Activated CD4-positive, alpha-beta T cell treated with anti-CD3 and anti-CD28 coated beads for 36 hours (primary cell): ENCODE measurements at regions of chr10 and their contacts with region 1.

Region 1: GRCh38 chr10:124221356-124222317 is 128.2 kb upstream of the CHST15 start:
- DNase-seq: no peak
- ATAC-seq: no peak
- H3K4me3 Mint-ChIP-seq: no peak overlapping the region
- H3K27ac Mint-ChIP-seq: no peak overlapping the region
- H3K4me1 Mint-ChIP-seq: no peaks in the 10 kb centered on the region
- H3K27me3 Mint-ChIP-seq: peaks cover 8% of the 10 kb centered on the region

Region 2: DNA sequence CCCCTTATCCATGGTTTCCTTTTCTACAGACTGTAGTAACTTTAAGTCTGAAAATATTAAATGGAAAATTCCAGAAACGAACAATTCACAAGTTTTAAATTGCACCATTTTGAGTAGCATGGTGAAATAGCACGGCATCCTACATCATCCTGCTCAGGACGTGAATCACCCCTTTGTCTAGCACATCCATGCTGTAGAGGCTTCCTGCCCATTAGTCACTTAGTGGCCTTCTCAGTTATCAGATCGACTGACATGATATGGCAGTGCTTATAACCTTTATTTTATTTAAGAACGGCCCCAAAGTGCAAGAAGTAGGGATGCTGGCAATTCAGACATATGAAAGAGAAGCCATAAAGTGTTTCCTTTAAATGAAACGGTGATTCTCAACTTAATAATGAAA is 412.7 kb before region 1 on chr10:
- CTCF ChIA-PET with region 1: no interaction called
- POLR2A ChIA-PET with region 1: no interaction called
- intact Hi-C with region 1: no loop called
- DNase-seq: peak; percentile 8
- ATAC-seq: peak; percentile 76
- H3K4me3 Mint-ChIP-seq: no peak overlapping the region
- H3K27ac Mint-ChIP-seq: no peak overlapping the region
- H3K4me1 Mint-ChIP-seq: no peaks in the 10 kb centered on the region
- H3K27me3 Mint-ChIP-seq: peaks cover 24% of the 10 kb centered on the region

Region 3: DNA sequence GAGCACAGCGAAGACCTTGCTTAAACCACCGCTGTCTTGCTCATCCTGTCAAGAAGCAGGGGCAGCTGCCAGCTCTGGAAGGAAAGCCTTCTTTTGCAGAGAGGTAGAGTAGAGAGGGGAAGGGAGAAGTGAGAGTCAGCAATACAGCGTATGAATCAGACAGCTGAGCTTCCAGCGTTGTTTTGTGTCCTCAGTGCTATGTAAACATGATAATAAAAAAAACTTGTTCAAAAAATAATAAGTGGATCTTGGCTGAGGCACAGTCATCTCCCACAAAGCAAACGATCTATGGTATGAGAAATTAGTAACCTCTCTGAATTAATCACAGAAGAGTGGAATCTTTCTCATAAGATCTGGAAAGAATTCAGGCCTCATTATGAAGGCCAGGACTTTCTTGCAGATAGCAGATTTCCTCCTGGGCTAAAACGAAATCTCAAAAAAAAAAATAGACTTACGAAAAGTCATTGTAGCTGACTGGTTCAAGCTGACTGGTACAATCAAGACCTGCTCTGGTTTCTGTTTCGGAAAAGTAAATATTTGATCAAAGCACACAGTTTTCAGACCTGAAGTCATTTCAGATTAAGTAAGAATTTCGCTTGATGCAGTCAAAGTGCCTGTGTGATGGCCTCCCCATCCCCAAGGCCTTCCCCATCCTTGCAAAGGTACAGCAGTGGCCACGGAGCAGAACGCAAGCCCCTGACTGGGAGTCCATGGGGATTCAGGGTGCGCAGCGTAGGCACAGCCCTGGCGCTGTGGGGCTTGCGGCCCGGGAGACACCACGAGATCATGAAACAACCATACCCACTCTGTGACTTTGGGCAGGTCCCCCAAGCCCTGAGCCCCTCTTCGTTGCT is 157.7 kb before region 1 on chr10:
- CTCF ChIA-PET with region 1: no interaction called
- POLR2A ChIA-PET with region 1: no interaction called
- intact Hi-C with region 1: loop called in 1 of 2 experiments (anchors 1 kb)
- DNase-seq: peak; percentile 10
- ATAC-seq: peak; percentile 76
- H3K4me3 Mint-ChIP-seq: no peak overlapping the region
- H3K27ac Mint-ChIP-seq: peak overlapping the region; percentile 12
- H3K4me1 Mint-ChIP-seq: peaks cover 29% of the 10 kb centered on the region
- H3K27me3 Mint-ChIP-seq: peaks cover 2% of the 10 kb centered on the region

Region 4: DNA sequence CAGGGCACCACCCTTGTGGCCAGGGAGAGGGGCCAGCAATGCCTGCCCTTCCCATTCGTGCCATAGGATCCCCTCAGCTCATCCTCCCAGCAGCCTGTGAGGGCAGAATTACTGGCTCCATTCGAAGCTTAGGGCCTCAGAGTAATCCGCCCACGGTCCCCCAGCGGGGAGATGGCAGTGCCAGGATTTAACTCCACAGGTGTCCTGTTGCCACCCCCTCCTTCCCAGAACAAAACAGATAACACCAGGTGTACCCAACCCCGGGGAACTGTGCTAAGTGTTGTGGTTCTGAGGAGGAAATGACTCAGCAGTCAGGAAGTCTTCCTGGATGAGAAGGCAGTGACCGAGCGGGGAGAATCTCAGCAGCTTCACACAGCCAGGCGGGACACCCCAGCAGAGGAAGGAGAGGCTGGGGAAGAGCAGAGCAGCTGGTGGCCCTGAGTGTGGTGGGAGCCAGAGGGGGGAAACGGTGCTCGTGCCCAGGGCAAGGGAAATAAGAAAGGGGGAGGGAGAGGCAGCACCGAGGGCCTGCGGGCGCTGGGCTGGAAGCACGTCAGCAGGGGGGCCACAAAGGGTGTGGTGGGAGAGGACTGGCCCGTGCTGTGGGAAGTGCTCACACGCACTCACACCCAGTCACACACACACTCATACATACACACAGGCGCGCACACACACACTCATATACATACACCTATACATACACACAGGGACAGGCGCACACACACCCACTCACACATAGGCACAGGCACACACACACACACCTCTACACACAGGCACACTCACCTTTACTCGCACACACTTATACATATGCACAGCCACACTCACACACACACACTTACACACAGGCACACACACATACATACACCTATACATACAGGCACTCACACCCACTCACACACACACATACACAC is 68.5 kb before region 1 on chr10:
- CTCF ChIA-PET with region 1: no interaction called
- POLR2A ChIA-PET with region 1: no interaction called
- intact Hi-C with region 1: loop called in 1 of 2 experiments (anchors 1 kb)
- DNase-seq: peak; percentile 72
- ATAC-seq: peak; percentile 85
- H3K4me3 Mint-ChIP-seq: peak overlapping the region; percentile 0
- H3K27ac Mint-ChIP-seq: no peak overlapping the region
- H3K4me1 Mint-ChIP-seq: no peaks in the 10 kb centered on the region
- H3K27me3 Mint-ChIP-seq: peaks cover 11% of the 10 kb centered on the region

Region 5: DNA sequence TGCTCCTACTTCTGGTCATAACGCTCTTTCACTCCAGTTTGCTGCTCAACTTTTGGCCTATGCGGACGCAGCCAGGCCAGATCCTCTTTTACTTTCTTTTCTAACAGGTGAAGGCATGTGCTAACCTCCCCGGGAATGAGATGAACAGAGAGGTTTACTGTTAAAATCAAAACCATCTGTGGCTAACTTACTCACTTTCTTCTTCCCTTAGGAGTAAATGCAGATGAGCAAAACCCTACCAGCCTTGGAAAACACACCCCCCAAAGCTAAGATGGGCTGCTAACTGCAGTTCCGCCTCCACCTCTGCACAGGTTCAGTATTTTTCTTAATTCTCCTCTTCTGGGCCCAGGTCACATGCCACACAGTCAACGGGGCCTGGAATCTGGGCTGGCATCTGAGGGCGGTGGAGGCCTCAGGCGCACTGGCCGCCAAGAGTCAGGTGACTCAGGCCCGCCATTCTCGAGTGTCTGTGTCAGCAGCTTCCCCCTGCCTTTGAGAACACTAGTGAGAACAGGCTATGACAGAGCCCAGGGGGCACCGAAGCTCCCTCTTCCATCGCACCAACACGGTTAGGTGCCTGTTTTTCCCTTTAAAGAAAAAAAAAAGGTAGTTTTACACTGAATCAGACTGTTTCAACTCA is 511.4 kb after region 1 on chr10:
- CTCF ChIA-PET with region 1: no interaction called
- POLR2A ChIA-PET with region 1: no interaction called
- intact Hi-C with region 1: loop called in 1 of 2 experiments (anchors 5 kb)
- DNase-seq: peak; percentile 87
- ATAC-seq: peak; percentile 71
- H3K4me3 Mint-ChIP-seq: peak overlapping the region; percentile 43
- H3K27ac Mint-ChIP-seq: peak overlapping the region; percentile 76
- H3K4me1 Mint-ChIP-seq: peaks cover 84% of the 10 kb centered on the region
- H3K27me3 Mint-ChIP-seq: no peaks in the 10 kb centered on the region